Activated T-helper 1 cell treated with anti-CD3 and anti-CD28 coated beads, Interleukin-12 subunit alpha, Interleukin-12 subunit beta, Interleukin-2, Interleukin-4 antibody, amounts not matched to agents 30 ng/mL and 10 ng/mL and 1 ng/mL, durations not matched to agents 14 hours and 24 hours and 36 hours (primary cell): ENCODE measurements at regions of chr5 and their contacts with region 1.

Region 1: GRCh38 chr5:142356716-142357473 is 32.1 kb upstream of the SPRY4 start:
- DNase-seq: peak; percentile 88
- H3K4me3 Mint-ChIP-seq: peak overlapping the region; percentile 84
- H3K27ac Mint-ChIP-seq: peak overlapping the region; percentile 92
- H3K4me1 Mint-ChIP-seq: peaks cover 58% of the 10 kb centered on the region
- H3K27me3 Mint-ChIP-seq: no peaks in the 10 kb centered on the region

Region 2: DNA sequence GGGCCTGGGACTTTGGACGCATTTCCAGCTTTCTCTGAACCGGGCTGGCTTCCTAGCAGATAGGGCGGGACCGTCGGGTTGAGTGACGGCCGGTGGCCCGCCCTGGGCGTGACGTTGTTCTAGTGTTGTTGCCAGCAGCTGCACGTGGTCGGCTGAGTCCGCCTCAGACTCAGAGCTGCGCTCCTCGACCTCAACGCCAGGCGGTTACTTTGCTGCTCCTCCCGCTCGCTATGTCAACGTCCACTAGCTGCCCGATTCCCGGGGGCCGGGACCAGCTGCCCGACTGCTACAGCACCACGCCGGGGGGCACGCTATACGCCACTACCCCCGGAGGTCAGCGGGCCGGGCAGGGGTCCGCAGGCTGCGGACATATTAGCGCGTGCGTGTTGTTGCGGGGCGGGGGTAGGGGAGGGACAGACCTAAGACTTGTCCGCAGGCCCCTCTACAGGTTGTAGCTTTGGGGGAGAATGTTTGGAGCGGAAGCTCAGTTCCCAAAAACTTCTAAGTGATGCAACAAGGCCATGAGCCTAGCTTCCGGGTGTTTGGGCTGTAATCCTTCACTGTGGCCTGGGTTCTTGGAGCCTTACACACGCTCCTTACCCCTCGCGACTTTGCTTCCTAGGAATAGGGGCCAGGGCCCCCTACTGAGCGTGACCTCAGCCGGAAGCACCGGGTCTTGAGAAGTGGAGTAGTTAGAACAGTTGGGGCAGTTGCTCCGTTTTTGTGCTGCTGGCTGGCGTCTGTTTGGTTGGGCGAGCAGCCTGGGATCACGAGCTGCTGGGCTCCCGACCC is 1809.2 kb before region 1 on chr5 and contains the start of gene EIF4EBP3:
- intact Hi-C with region 1: loop called (anchors 5 kb)
- DNase-seq: peak; percentile 81
- H3K4me3 Mint-ChIP-seq: peak within 1 kb of the TSS; percentile 80
- H3K27ac Mint-ChIP-seq: peak within 1 kb of the TSS; percentile 82
- H3K4me1 Mint-ChIP-seq: peaks cover 48% of the 10 kb centered on the region
- H3K27me3 Mint-ChIP-seq: no peaks in the 10 kb centered on the region
- total RNA-seq, gene EIF4EBP3: 12.7 and 16.1 TPM in 2 replicates

Region 3: DNA sequence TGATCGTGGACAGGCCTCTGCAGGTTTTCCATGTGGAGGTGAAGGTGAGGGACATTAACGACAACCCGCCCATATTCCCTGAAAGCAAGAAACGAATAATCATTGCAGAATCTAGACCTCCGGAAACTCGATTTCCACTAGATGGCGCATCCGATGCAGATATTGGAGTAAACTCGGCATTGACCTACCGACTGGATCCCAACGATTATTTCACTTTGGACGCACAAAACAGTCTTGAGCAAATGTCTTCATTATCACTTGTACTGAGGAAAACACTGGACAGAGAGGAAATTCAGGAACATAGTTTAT is 1474.3 kb before region 1 on chr5:
- intact Hi-C with region 1: no loop called
- DNase-seq: no peak
- H3K4me3 Mint-ChIP-seq: no peak overlapping the region
- H3K27ac Mint-ChIP-seq: no peak overlapping the region
- H3K4me1 Mint-ChIP-seq: no peaks in the 10 kb centered on the region
- H3K27me3 Mint-ChIP-seq: no peaks in the 10 kb centered on the region

Region 4: GRCh38 chr5:141605523-141606277 is 751.2 kb before region 1 on chr5:
- intact Hi-C with region 1: no loop called
- DNase-seq: peak; percentile 76
- H3K4me3 Mint-ChIP-seq: peak overlapping the region; percentile 45
- H3K27ac Mint-ChIP-seq: peak overlapping the region; percentile 85
- H3K4me1 Mint-ChIP-seq: peaks cover 78% of the 10 kb centered on the region
- H3K27me3 Mint-ChIP-seq: no peaks in the 10 kb centered on the region

Region 5: GRCh38 chr5:142324871-142325724 is 31.8 kb before region 1 on chr5 and contains the start of gene SPRY4:
- intact Hi-C with region 1: loop called (anchors 1 kb)
- DNase-seq: peak; percentile 80
- H3K4me3 Mint-ChIP-seq: peak within 1 kb of the TSS; percentile 93
- H3K27ac Mint-ChIP-seq: peak within 1 kb of the TSS; percentile 81
- H3K4me1 Mint-ChIP-seq: peaks cover 42% of the 10 kb centered on the region
- H3K27me3 Mint-ChIP-seq: peaks cover 43% of the 10 kb centered on the region
- total RNA-seq, gene SPRY4: 1.7 and 2.4 TPM in 2 replicates

Region 6: DNA sequence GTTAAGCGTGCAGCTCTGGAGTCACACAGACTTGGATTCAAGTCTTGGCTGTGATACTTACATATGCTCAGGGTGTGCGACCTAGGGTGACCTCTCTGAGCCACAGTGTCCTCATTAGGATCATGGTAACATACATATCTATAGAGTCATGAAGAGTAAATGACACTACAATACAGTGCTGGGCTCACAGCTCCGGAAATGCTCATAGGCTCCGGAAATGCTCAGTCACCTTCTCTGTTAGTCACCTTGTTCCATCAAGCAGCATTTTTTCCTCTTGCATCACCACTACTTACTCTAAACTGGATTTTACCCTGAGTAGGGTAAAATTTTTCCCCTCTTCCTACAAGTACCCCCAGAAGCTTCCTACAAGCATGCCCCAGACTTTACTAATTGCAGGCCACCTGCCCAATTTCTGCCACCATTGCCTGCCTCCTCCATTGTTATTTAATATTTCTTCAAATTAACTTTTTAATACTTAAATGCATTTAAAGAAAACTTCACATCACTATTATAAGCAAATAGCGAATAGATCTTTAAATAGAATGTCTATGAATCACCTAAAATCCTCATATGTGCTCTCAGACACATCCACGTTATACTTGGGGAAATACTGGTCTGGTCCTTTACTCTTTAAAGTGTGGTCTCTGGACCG is 115.5 kb after region 1 on chr5:
- intact Hi-C with region 1: loop called (anchors 1 kb)
- DNase-seq: peak; percentile 17
- H3K4me3 Mint-ChIP-seq: no peak overlapping the region
- H3K27ac Mint-ChIP-seq: peak overlapping the region; percentile 81
- H3K4me1 Mint-ChIP-seq: peaks cover 15% of the 10 kb centered on the region
- H3K27me3 Mint-ChIP-seq: no peaks in the 10 kb centered on the region

Region 7: DNA sequence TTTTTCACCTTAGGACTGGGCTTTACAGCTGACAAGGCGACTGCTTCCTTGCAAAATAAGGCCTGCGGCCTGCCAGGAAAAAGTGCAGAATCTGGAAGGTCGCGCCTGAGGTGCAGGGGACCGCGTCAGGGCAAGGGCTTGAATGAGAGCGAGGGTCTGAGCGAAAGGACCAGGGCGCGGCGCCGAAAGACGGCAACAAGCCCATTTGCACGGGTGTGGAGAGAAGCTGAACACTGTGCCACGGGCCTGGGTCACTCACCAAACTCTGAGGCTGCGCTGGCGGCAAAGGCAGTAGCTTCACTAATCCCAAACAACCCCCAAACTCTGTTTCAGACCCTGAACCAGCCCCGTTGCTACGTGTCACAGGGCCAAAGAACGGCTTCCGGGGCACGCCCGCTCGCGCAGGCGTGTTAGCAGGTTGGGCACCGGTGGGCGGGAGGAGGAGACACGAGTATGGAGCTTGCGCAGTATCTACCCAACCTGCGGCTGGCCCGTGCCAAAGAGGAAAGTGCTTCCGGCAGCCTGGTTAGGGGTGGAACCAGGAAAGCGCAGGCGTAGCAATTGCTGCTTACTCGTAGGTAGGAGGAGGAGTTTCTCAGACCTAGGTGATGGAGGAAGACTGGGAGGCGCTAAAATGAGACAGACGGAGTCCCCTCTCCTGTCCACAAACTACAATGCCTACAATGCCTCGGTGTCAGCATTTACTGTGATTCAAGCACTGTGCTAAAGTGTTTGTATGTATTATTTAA is 1813.6 kb after region 1 on chr5 and contains the starts of genes KCTD16 and YIPF5:
- intact Hi-C with region 1: loop called (anchors 5 kb)
- DNase-seq: peak; percentile 98
- H3K4me3 Mint-ChIP-seq: peak within 1 kb of the TSS; percentile 96
- H3K27ac Mint-ChIP-seq: peak within 1 kb of the TSS; percentile 80
- H3K4me1 Mint-ChIP-seq: peaks cover 45% of the 10 kb centered on the region
- H3K27me3 Mint-ChIP-seq: peaks cover 13% of the 10 kb centered on the region
- total RNA-seq, gene KCTD16: not detected in 2 replicates
- total RNA-seq, gene YIPF5: 34.2 and 37.9 TPM in 2 replicates